PC-9 (cell line): ENCODE measurements at regions of chr2 and their contacts with region 1.

Region 1: DNA sequence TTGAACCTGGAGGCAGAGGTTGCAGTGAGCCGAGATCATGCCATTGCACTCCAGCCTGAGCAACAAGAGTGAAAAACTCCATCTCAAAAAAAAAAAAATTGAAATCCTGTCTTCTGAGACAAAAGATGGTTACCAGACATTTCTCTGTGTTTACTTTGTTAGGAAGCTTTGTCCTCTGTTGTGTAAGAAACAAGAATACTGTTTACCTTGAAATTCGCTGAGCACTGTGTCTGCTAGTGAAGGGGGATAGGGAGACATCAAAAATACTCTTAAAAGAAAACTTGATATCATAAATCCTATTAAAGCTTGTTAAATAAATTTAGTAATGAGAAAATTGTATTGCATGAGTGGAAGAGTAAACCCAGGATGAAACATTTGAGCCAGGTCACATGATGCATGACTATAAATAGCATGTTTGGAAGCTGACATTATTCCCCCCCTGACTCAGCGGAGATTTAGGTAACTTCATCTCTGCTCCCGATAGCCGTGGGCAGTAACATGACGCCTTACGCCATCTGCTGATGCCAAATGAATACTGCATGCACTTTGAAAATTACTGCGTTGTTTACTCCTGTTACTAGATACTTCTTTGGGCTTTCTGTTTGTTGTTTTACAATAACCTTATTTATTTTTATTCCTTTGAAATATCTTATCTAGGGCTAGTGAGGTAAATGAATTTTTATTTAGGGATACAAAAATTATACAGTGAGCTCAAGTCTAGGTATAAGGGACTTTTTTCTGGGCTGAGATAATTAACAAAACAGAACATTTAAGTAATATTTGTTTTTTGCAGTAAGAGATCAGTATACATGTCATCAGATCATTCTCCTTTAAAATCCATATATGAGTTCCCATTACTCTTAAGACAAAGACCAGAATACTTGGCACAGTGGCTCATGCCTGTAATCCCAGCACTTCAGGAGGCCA is 134.9 kb downstream of the MAP3K20 start:
- DNase-seq: peak; percentile 70 to 85
- H3K4me3 ChIP-seq: no peak overlapping the region
- H3K27ac ChIP-seq: peak overlapping the region; percentile 39
- H3K4me1 ChIP-seq: peaks cover 13% of the 10 kb centered on the region
- H3K27me3 ChIP-seq: no peaks in the 10 kb centered on the region
- CTCF ChIP-seq: peak; percentile 99

Region 2: DNA sequence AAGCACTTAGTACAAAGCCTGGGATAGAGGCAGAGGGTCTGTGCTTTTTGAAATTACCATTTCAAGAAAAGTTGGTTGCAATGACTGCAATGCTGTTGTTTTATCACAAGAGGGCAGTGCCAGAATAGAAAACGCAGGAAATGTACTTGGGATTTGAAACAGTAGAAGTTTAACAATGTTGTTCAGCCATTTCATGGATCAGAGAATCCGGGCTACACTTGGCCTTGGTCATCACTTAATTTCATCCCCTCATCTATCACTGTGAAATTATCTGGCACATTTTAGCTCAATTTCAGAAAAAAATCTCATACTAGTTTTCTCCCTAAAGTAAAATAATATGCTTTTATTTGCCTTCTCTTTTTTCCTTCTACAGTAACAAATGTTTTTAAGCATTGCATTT is 404.0 kb before region 1 on chr2:
- CTCF ChIA-PET with region 1: no interaction called
- POLR2A ChIA-PET with region 1: no interaction called
- intact Hi-C with region 1: loop called (anchors 1 kb)
- DNase-seq: peak; percentile 23 to 68
- H3K4me3 ChIP-seq: no peak overlapping the region
- H3K27ac ChIP-seq: no peak overlapping the region
- H3K4me1 ChIP-seq: no peaks in the 10 kb centered on the region
- H3K27me3 ChIP-seq: no peaks in the 10 kb centered on the region
- CTCF ChIP-seq: peak; percentile 100

Region 3: GRCh38 chr2:172813314-172813888 is 397.1 kb before region 1 on chr2:
- CTCF ChIA-PET with region 1: interaction called, 3 read pairs
- POLR2A ChIA-PET with region 1: no interaction called
- intact Hi-C with region 1: loop called (anchors 1 kb)
- DNase-seq: peak in 1 of 2 experiments; percentile 17
- H3K4me3 ChIP-seq: no peak overlapping the region
- H3K27ac ChIP-seq: no peak overlapping the region
- H3K4me1 ChIP-seq: no peaks in the 10 kb centered on the region
- H3K27me3 ChIP-seq: no peaks in the 10 kb centered on the region
- CTCF ChIP-seq: peak; percentile 81

Region 4: DNA sequence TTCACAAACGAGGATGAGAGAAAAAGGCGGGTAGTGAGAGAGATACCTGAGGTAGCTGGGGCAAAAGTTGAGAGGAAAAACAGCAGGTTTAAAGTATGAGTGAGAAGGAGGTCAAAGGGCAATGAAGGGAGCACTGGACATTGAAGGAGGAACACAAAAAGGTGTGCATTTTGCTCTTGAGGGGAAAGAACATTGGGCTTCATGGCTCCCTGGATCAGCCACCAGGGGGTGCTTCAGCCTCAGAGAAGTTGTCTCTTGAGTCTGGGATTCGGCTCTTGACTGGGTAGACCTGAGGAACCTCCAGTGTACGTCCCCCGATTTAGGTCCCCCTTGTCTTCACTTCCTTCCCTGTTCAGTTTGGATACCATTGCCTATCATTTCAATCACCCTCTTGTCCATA is 346.4 kb before region 1 on chr2:
- CTCF ChIA-PET with region 1: no interaction called
- POLR2A ChIA-PET with region 1: no interaction called
- intact Hi-C with region 1: loop called (anchors 2 kb)
- DNase-seq: peak; percentile 50 to 53
- H3K4me3 ChIP-seq: no peak overlapping the region
- H3K27ac ChIP-seq: no peak overlapping the region
- H3K4me1 ChIP-seq: no peaks in the 10 kb centered on the region
- H3K27me3 ChIP-seq: no peaks in the 10 kb centered on the region
- CTCF ChIP-seq: peak; percentile 79

Region 5: GRCh38 chr2:172972005-172972619 is 238.4 kb before region 1 on chr2:
- CTCF ChIA-PET with region 1: interaction called, 5 read pairs
- POLR2A ChIA-PET with region 1: interaction called, 23 read pairs
- intact Hi-C with region 1: loop called (anchors 1 kb)
- DNase-seq: peak; percentile 66 to 69
- H3K4me3 ChIP-seq: no peak overlapping the region
- H3K27ac ChIP-seq: no peak overlapping the region
- H3K4me1 ChIP-seq: peaks cover 30% of the 10 kb centered on the region
- H3K27me3 ChIP-seq: no peaks in the 10 kb centered on the region
- CTCF ChIP-seq: peak; percentile 99

Region 6: DNA sequence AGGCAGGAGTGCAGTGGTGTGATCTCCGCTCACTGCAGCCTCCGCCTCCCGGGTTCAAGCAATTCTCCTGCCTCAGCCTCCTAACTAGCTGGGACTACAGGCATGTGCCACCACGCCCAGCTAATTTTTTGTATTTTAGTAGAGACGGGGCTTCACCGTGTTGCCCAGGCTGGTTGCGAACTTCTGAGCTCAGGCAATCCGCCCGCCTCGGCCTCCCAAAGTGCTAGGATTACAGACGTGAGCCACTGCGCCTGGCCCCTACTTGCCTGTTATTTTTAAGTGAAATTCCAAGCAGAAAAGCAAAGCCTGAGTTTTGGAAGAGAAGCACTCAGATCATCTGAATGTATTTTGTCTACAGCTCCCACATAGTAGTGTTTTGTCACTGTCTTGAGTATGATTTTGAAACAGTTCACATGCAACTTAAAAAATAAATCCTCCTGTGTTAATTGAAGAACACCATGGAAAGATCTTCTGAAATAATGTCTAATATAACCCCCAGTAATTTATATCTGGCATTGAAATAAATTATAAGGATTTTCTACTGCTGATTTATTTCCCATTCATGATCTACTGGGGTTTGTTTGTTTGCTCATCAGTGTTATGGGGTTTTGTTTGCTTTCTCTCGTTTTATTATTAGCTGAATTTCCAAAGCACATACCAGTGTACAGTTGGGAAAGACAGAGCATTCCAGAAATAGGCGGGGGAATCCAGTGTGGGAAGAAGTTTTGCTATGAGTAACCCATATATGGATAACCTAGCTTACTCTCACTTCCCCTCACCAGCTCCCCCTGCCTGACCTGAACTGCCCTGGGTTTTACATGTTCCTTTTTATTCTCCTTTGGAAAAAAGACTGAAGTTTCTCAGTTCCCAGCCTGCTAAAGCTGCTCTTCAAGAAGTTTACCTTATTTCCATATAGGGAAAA is 214.9 kb before region 1 on chr2:
- CTCF ChIA-PET with region 1: no interaction called
- POLR2A ChIA-PET with region 1: no interaction called
- intact Hi-C with region 1: no loop called
- DNase-seq: peak; percentile 72 to 99
- H3K4me3 ChIP-seq: peak overlapping the region; percentile 2; the same call in 1 of the 2 replicates
- H3K27ac ChIP-seq: peak overlapping the region; percentile 90
- H3K4me1 ChIP-seq: peaks cover 67% of the 10 kb centered on the region
- H3K27me3 ChIP-seq: no peaks in the 10 kb centered on the region
- CTCF ChIP-seq: peak; percentile 75

Region 7: GRCh38 chr2:173016451-173016850 is 194.1 kb before region 1 on chr2:
- CTCF ChIA-PET with region 1: no interaction called
- POLR2A ChIA-PET with region 1: no interaction called
- intact Hi-C with region 1: no loop called
- DNase-seq: no peak
- H3K4me3 ChIP-seq: no peak overlapping the region
- H3K27ac ChIP-seq: no peak overlapping the region
- H3K4me1 ChIP-seq: peaks cover under 1% of the 10 kb centered on the region; the same call in 1 of the 2 replicates
- H3K27me3 ChIP-seq: no peaks in the 10 kb centered on the region
- CTCF ChIP-seq: no peak

Region 8: GRCh38 chr2:173027181-173028128 is 183.1 kb before region 1 on chr2:
- CTCF ChIA-PET with region 1: interaction called, 46 read pairs
- POLR2A ChIA-PET with region 1: interaction called, 4 read pairs
- intact Hi-C with region 1: loop called (anchors 1 kb)
- DNase-seq: peak; percentile 73 to 84
- H3K4me3 ChIP-seq: no peak overlapping the region
- H3K27ac ChIP-seq: no peak overlapping the region
- H3K4me1 ChIP-seq: no peaks in the 10 kb centered on the region
- H3K27me3 ChIP-seq: no peaks in the 10 kb centered on the region
- CTCF ChIP-seq: peak; percentile 100

Region 9: DNA sequence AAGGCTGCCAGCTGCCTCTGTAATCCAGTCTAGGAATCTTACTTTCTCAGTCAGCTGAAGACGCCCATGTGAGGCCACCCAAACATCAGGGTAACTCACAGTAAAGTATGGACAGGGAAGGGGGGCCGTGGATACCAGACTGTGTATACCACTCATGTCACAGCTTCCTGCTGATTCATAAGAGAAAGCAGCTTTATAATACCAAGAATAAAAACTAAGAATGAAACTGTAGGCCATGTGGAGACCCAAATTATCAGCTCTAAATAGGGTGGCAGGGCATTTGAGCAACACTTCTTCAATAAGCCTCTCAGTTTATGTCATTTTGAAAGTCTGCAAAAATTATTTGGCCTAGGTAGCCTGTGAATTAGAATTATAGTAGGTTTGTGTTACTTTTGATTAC is 29.1 kb after region 1 on chr2:
- CTCF ChIA-PET with region 1: no interaction called
- POLR2A ChIA-PET with region 1: no interaction called
- intact Hi-C with region 1: no loop called
- DNase-seq: no peak
- H3K4me3 ChIP-seq: no peak overlapping the region
- H3K27ac ChIP-seq: no peak overlapping the region
- H3K4me1 ChIP-seq: no peaks in the 10 kb centered on the region
- H3K27me3 ChIP-seq: no peaks in the 10 kb centered on the region
- CTCF ChIP-seq: no peak